CD8-positive, alpha-beta memory T cell (primary cell): ENCODE measurements at regions of chr2 and their contacts with region 1.

Region 1: DNA sequence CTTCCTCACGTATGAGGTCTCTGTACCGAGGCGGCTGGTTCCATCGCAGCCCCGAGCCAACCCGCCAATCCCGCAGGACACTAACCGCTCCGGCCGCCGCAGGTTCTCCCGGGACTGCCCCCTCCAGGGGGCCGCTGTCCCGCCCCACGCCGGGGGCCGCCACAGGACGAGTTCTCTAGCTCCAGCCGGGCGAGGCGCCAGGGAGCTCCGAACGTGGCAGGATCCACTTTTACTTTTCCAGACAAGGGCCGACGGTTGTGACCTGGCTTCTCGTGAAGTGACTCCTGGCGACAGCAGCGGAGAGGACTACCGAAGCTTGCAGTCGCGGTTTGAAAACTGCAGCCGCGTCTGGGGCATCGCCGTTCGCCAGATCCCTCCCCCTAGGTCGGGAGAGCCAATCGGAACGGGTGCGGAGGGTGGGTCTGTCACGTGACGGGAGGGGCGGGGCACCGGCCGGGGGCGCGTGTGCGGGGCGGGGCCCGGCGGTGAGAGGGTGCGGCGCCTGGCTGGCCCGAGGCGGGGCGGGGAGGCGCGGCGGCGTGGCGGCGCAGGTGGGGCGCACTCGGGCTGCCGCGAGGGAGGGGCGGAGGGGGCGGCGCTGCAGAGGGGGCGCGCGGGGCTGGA is at the start of gene STK17B:
- DNase-seq: peak; percentile 93 to 98 (median 95)
- H3K4me3 ChIP-seq: peak within 1 kb of the TSS; percentile 88
- H3K4me3 Mint-ChIP-seq: peak within 1 kb of the TSS; percentile 95 to 99 (median 97)
- H3K27ac ChIP-seq: peak within 1 kb of the TSS; percentile 98
- H3K27ac Mint-ChIP-seq: peak within 1 kb of the TSS; percentile 97 to 100 (median 98)
- H3K4me1 ChIP-seq: peaks cover 43% of the 10 kb centered on the region
- H3K4me1 Mint-ChIP-seq: peaks cover 43 to 56% (median 51%) of the 10 kb centered on the region in 3 donors
- H3K27me3 ChIP-seq: no peaks in the 10 kb centered on the region
- H3K27me3 Mint-ChIP-seq: peaks cover 0 to 2% of the 10 kb centered on the region in 2 donors
- total RNA-seq, gene STK17B: 121 to 130 TPM

Region 2: DNA sequence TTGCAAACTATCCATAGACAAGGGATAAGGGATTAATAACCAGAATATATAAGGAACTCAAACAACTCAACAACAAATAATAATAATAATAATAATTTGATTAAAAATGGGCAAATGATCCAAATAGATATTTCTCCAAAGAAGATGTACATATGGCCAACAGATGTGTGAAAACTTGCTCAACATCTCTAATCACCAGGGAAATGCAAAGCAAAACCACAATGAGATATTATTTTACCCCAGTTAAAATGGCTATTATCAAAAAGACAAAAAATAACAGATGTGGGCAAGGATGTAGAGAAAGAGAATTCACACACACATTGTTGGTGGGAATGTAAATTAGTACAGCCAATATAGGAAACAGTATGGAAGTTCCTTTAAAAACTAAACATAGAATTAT is 129.6 kb before region 1 on chr2:
- CTCF ChIA-PET with region 1: no interaction called
- POLR2A ChIA-PET with region 1: no interaction called
- DNase-seq: no peak
- H3K4me3 ChIP-seq: no peak overlapping the region
- H3K4me3 Mint-ChIP-seq: no peak overlapping the region
- H3K27ac ChIP-seq: no peak overlapping the region
- H3K27ac Mint-ChIP-seq: no peak overlapping the region
- H3K4me1 ChIP-seq: no peaks in the 10 kb centered on the region
- H3K4me1 Mint-ChIP-seq: no peaks in the 10 kb centered on the region
- H3K27me3 ChIP-seq: no peaks in the 10 kb centered on the region
- H3K27me3 Mint-ChIP-seq: peaks cover 19 to 54% of the 10 kb centered on the region in 2 donors

Region 3: DNA sequence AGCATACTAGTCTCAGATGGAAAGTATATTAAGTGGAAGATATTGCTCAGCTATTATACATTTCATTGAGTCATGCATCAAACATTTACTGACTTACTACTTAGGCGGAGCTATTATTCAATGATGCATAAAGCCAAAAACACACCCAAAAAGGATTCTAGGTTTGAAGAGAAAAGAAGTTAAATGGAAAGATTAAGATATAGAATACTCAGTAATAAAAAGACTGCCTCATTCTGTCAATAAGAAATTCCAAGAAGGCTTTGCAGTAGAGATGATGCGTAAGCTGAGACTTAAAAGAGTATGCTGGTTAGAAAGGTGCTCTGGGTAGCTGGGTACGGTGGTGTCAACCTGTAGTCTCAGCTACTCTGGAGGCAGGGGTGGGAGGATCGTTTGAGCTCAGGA is 27.6 kb before region 1 on chr2:
- CTCF ChIA-PET with region 1: interaction called, 10 read pairs
- POLR2A ChIA-PET with region 1: interaction called, 18 read pairs
- DNase-seq: peak in 1 of 5 donors; percentile 4
- H3K4me3 ChIP-seq: no peak overlapping the region
- H3K4me3 Mint-ChIP-seq: peak overlapping the region in 5 of 7 donors; percentile 4 to 43 (median 17)
- H3K27ac ChIP-seq: no peak overlapping the region
- H3K27ac Mint-ChIP-seq: peak overlapping the region; percentile 3 to 91 (median 69)
- H3K4me1 ChIP-seq: peaks cover 69% of the 10 kb centered on the region
- H3K4me1 Mint-ChIP-seq: peaks cover 60 to 85% (median 82%) of the 10 kb centered on the region in 3 donors
- H3K27me3 ChIP-seq: no peaks in the 10 kb centered on the region
- H3K27me3 Mint-ChIP-seq: no peaks in the 10 kb centered on the region

Region 4: GRCh38 chr2:196182439-196183171 is 11.2 kb after region 1 on chr2:
- CTCF ChIA-PET with region 1: interaction called, 56 read pairs
- POLR2A ChIA-PET with region 1: interaction called, 26 read pairs
- DNase-seq: peak in 1 of 5 donors; percentile 60
- H3K4me3 ChIP-seq: peak overlapping the region; percentile 43
- H3K4me3 Mint-ChIP-seq: peak overlapping the region; percentile 22 to 84 (median 64)
- H3K27ac ChIP-seq: peak overlapping the region; percentile 27
- H3K27ac Mint-ChIP-seq: peak overlapping the region; percentile 91 to 99 (median 98)
- H3K4me1 ChIP-seq: peaks cover 86% of the 10 kb centered on the region
- H3K4me1 Mint-ChIP-seq: peaks cover 82 to 95% (median 87%) of the 10 kb centered on the region in 3 donors
- H3K27me3 ChIP-seq: no peaks in the 10 kb centered on the region
- H3K27me3 Mint-ChIP-seq: no peaks in the 10 kb centered on the region

Region 5: DNA sequence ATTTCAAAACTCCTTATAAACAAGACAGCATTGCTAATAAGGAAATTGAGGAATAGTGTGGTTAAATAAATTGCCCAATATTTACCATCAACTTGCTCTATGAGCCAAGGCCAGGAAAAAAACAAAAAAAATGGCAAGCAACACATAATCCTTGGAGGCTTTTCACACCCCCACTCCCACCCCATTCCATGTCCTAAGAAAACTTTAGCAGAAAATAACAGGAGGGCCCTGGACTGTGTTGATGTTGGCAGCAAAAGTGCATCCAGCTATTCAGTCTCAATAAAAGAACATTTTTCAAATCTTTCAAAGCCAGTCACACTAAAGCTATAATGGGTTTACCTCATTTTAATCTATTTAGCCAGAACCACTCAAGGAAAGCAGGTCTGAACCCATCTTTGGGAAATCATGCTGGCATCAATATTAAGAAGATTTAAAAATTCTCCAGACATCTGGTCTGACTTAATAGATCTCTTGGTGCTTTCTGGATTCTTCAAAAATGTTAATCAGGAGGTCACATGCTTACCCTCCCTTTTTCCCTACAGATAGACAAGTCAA is 34.6 kb after region 1 on chr2:
- CTCF ChIA-PET with region 1: interaction called, 10 read pairs
- POLR2A ChIA-PET with region 1: interaction called, 19 read pairs
- DNase-seq: no peak
- H3K4me3 ChIP-seq: no peak overlapping the region
- H3K4me3 Mint-ChIP-seq: no peak overlapping the region
- H3K27ac ChIP-seq: no peak overlapping the region
- H3K27ac Mint-ChIP-seq: no peak overlapping the region
- H3K4me1 ChIP-seq: peaks cover 40% of the 10 kb centered on the region
- H3K4me1 Mint-ChIP-seq: peaks cover 45 to 56% (median 50%) of the 10 kb centered on the region in 3 donors
- H3K27me3 ChIP-seq: no peaks in the 10 kb centered on the region
- H3K27me3 Mint-ChIP-seq: no peaks in the 10 kb centered on the region

Region 6: GRCh38 chr2:196239622-196240587 is 68.5 kb after region 1 on chr2:
- CTCF ChIA-PET with region 1: interaction called, 14 read pairs
- POLR2A ChIA-PET with region 1: interaction called, 6 read pairs
- DNase-seq: peak; percentile 64 to 92 (median 85)
- H3K4me3 ChIP-seq: peak overlapping the region; percentile 40
- H3K4me3 Mint-ChIP-seq: peak overlapping the region; percentile 44 to 73 (median 66)
- H3K27ac ChIP-seq: peak overlapping the region; percentile 60
- H3K27ac Mint-ChIP-seq: peak overlapping the region; percentile 84 to 98 (median 92)
- H3K4me1 ChIP-seq: peaks cover 74% of the 10 kb centered on the region
- H3K4me1 Mint-ChIP-seq: peaks cover 68 to 82% (median 77%) of the 10 kb centered on the region in 3 donors
- H3K27me3 ChIP-seq: no peaks in the 10 kb centered on the region
- H3K27me3 Mint-ChIP-seq: no peaks in the 10 kb centered on the region